HEK293T (cell line): ENCODE measurements at regions of chr9 and their contacts with region 1.

Region 1: DNA sequence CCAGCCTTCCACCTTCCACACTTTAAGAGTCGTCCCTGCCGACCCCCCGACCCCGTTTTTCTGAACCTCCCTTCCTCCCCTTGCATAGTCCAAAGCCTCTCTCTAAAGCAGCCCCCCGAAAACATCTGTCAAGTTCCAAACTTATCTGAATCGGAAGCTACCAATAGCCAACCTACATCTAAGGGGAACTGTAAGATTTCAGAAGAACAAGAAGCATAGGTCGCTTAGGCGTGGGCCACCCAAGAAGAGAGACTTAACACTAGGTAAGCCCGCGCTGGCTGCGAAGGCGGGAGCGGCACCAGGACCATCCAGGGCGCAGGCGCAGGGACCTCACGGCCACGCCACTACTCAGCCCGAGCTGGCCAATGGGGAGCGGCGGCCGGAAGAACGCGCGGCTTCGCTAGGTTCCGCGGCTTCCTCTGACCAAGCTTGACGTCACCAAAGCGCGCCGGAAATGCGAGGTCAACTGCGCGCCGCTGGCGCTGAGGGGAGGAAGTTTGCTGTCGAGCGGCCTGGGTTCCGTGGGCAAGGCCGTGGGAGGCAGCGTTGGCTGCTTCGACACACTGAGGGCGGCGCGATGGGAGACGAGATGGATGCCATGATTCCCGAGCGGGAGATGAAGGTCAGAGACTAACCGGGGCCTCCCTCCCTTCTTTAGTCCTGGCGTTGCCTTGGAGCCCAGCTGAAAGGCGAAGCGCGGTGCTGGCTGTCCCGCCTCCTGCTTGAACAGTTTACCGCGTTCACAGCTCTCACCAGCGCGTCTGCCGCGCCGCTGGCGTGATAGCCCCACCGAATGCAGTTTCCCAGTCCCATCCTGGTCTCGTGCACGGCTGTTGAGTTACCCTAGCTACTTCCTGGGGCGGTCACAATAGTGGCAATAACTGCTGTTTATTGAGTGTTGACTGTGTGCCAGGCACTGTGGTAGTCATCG is at the start of gene NUP214:
- DNase-seq: peak; percentile 99

Region 2: GRCh38 chr9:131096269-131097125 is 28.9 kb before region 1 on chr9 and contains the start of gene AIF1L:
- CTCF ChIA-PET with region 1: no interaction called
- POLR2A ChIA-PET with region 1: interaction called, 29 read pairs
- DNase-seq: peak; percentile 82

Region 3: GRCh38 chr9:131111854-131112311 is 13.5 kb before region 1 on chr9:
- CTCF ChIA-PET with region 1: no interaction called
- POLR2A ChIA-PET with region 1: interaction called, 17 read pairs
- DNase-seq: no peak

Region 4: DNA sequence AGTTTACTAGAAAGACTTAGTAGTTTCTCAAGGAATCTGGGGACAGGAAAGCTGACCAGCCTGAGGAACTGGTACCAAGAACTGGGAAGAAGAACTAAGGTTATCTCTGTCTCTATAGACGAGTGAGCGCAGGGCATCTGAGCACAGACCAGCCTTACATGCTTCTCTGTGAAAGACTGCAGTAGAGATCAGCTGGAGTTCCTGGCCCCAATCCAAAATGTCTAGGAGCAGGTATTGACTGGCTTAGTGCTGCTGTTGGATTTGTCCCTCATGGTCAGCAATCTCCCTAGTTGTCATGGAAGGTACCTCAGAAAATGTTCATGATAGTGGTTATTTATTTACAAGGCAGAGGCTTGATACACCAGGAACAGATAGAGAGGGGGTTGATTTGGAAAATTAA is 13.3 kb after region 1 on chr9:
- CTCF ChIA-PET with region 1: no interaction called
- POLR2A ChIA-PET with region 1: interaction called, 10 read pairs
- DNase-seq: no peak